Left ventricle myocardium inferior (tissue), 1 donor: ENCODE measurements at regions of chr13 and their contacts with region 1.

Region 1: GRCh38 chr13:99916366-99917103 is 55.0 kb downstream of the ZIC5 start:
- DNase-seq: no peak
- H3K4me3 ChIP-seq: no peak overlapping the region
- H3K27ac ChIP-seq: no peak overlapping the region
- H3K4me1 ChIP-seq: no peaks in the 10 kb centered on the region
- H3K27me3 ChIP-seq: peaks cover 74% of the 10 kb centered on the region
- CTCF ChIP-seq: peak; percentile 88

Region 2: DNA sequence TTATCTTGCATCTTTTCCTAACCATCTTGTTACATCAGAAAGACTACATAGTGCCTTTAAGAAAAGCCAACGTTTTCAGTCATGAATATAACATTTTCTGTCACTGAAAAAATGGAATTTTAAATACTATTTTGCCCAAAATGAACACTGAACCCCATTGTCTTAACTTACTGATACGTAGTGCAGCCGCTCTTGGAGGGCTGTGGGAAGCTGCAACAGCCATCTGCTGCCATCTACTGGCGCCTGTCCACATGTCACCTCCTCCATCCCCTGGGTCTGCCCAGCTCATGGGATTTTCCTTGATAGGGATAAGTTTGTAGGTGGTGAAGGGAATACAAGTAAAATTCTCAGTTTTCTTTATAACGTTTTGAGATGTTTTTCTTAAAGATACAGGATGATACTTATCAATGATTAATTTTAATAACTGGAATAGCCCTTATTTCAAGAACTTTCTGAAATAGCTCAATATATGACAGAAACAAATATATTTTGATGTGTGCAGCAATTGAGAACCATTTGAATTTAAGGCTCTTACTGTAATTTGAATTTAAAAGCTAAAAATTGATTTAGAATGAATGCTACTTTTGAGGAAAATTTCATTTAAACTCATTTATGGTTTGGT is 598.4 kb after region 1 on chr13:
- intact Hi-C with region 1: loop called (anchors 5 kb)
- DNase-seq: peak; percentile 76
- H3K4me3 ChIP-seq: no peak overlapping the region
- H3K27ac ChIP-seq: peak overlapping the region; percentile 25
- H3K4me1 ChIP-seq: peaks cover 27% of the 10 kb centered on the region
- H3K27me3 ChIP-seq: no peaks in the 10 kb centered on the region
- CTCF ChIP-seq: peak; percentile 98